Stomach (tissue), 19 donors: ENCODE measurements at regions of chr4 and their contacts with region 1.

Region 1: DNA sequence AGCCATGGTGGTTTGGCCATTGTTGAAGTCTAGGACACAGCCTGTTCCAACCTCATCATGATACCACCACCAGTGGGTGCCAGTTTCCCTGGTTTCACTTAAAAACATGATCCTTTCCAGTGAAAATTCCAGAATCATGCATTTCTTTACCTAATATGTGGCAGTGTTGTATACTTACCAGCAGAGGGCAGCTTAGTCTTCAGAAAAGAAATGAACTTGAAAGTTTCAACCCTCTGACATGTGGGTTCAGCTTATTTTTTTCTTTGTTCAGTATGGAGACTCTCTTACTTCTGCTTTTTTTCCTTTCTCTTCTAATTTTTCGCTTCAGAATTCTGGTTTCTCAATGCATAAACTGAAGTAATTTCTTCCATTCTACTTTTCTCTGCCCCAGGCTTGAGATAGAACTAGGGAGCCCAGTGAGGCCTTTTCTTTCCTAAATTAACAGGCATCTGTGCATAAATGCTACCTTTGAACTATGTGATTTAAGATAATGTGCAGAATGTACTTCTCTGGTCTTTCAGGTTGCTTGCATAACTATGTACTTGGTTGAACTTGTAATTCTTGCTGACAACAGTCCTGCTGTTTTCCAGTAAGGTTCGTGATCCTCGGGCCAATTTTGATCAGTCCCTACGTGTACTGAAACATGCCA is 10.7 kb downstream of the LIAS start:
- DNase-seq: peak in 1 of 2 donors; percentile 83
- H3K4me3 ChIP-seq: no peak overlapping the region
- H3K27ac ChIP-seq: peak overlapping the region in 4 of 5 donors; percentile 25 to 47 (median 35)
- H3K4me1 ChIP-seq: peaks cover 0 to 21% (median 9%) of the 10 kb centered on the region in 4 donors
- H3K27me3 ChIP-seq: no peaks in the 10 kb centered on the region
- CTCF ChIP-seq: peak in 5 of 7 experiments; percentile 76 to 86 (median 82)
- EP300 ChIP-seq: no peak
- POLR2A ChIP-seq: no peak

Region 2: DNA sequence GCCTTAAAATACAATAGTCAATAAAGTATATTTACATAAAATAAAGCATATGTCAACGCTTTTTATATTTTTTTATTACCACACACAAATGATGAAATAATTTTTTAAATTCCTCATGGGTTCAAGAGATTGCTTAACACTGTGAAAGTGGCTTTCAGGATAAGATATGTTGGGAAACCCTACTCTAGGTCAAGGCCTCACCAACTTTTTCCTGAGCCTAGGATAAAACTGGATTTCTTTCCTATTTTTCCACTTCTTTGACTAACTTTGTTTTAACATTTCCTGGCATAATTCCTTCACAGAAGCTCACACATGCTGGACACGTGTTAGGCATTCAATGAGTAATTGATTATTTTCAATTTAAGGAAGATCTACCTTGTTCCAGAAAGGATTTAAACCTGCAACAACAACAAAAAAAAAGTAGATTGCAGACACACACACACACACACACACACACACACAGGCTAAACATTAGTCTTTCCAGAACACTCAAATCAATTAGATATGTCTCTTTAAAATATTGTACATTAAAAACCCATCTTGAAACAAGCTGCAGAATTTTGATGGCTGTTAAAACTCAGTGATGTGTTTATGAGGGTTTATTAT is 53.8 kb before region 1 on chr4:
- intact Hi-C with region 1: no loop called
- DNase-seq: no peak
- H3K4me3 ChIP-seq: no peak overlapping the region
- H3K27ac ChIP-seq: no peak overlapping the region
- H3K4me1 ChIP-seq: no peaks in the 10 kb centered on the region
- H3K27me3 ChIP-seq: no peaks in the 10 kb centered on the region
- CTCF ChIP-seq: no peak
- EP300 ChIP-seq: no peak
- POLR2A ChIP-seq: no peak

Region 3: DNA sequence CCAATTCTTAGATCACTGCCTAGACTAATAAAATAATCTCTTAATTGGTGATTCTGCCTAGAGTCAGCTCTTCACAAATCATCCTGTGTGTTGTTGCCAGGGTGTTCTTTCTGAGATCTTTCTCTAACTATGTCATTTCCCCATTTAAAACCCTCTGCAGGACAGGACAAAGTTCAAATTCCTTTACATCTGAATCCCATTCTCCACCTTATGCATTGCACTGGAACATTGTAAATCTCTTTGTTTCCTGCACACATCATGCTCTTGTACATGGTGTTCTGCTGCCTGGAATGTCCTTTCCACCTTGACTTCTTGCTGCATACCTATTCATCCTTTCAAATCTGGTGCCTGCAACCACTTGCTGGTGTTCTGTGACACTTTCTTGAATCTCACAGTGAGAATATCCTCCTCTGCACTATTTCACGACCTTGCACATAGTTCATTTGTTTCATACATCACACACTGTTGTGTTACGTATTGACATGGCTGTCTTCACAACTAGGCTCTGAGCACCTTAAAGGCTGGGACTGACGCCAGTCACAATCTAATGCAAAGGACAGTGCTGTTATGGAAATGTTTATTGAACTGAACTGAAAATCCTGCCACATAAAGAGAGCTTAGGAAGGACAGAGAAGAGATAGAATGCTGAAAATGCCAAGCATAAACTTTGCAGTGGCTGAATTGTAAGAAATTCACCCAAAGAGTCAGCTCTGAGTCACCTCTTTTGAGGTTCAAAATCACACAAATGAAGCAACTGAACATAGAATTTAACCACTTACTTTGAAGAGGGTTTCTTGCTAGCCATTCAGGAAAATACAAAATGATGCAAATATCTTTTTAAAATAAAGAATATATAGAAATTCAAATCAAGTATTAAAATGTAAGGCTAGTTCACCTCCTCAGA is 195.5 kb after region 1 on chr4:
- intact Hi-C with region 1: loop called (anchors 10 kb)
- DNase-seq: no peak
- H3K4me3 ChIP-seq: no peak overlapping the region
- H3K27ac ChIP-seq: no peak overlapping the region
- H3K4me1 ChIP-seq: no peaks in the 10 kb centered on the region
- H3K27me3 ChIP-seq: no peaks in the 10 kb centered on the region
- CTCF ChIP-seq: no peak
- EP300 ChIP-seq: no peak
- POLR2A ChIP-seq: no peak

Region 4: DNA sequence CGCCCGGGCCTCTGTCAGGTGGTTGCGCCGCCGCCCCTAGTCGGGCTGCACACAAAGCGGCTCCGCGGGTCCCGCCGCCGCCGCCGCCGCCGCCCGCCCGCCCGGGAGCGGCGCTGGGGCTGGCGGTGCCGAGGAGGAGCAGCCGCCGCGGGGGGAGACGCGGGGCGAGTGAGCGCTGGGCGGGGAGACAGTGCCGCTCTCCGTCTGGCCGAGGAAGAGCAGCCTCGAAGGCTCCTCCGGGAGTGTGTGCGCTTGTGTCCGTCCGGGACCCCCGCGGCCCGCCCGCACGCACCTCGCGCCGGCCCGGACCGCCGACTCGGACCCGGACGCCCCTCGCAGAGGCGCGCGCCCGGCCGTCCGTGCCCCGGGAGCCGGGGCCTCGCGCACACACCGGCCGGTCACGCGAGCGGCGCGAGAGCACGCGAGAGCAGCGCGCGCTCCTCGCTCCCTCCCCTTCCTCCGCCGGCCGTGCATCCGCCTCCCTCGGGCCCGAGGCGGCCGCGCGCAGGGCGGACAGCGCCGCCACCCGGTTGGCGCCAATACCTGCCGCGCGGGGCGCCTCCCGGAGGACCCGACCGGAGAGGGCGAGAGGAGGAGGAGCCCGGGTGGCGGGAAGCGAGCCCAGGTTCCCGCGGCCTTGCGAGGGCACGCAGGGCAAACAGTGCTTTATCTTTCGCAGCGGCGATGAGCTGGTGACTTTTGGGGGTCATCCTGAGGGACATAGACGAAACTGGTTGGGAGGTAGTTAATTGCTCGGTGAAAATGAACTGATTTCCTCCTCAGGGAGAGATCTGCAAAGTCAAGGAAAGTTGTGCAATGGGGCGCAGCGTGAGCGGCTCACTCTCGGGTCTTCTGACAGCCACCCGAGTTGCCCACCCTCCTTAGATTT is 508.2 kb after region 1 on chr4 and contains the start of gene PDS5A:
- intact Hi-C with region 1: loop called (anchors 5 kb)
- DNase-seq: peak; percentile 91 to 98
- H3K4me3 ChIP-seq: peak within 1 kb of the TSS; percentile 80 to 99 (median 91)
- H3K27ac ChIP-seq: peak within 1 kb of the TSS; percentile 96 to 98 (median 97)
- H3K4me1 ChIP-seq: peaks cover 16 to 47% (median 29%) of the 10 kb centered on the region in 4 donors
- H3K27me3 ChIP-seq: no peaks in the 10 kb centered on the region
- CTCF ChIP-seq: peak in 5 of 7 experiments; percentile 54 to 94 (median 82)
- EP300 ChIP-seq: no peak
- POLR2A ChIP-seq: no peak
- total RNA-seq, gene PDS5A: 76.4 to 117 (median 111) TPM